ENCODE measurements at regions of chr9 and their contacts with region 1.

Region 1: GRCh38 chr9:89428901-89429890 is 68.7 kb downstream of the SEMA4D start:
- DNase-seq: no peak
- ATAC-seq: peak; percentile 25
- H3K4me3 ChIP-seq: no peak overlapping the region
- H3K27ac ChIP-seq: peak overlapping the region; percentile 90
- H3K4me1 ChIP-seq: peaks cover 81% of the 10 kb centered on the region
- H3K27me3 ChIP-seq: no peaks in the 10 kb centered on the region
- CTCF ChIP-seq: peak; percentile 60 to 84 (median 74)
- EP300 ChIP-seq: no peak
- POLR2A ChIP-seq: no peak
- RAD21 ChIP-seq: peak; percentile 85

Region 2: GRCh38 chr9:89367281-89367680 is 61.9 kb before region 1 on chr9:
- CTCF ChIA-PET with region 1: no interaction called
- POLR2A ChIA-PET with region 1: no interaction called
- RAD21 ChIA-PET with region 1: no interaction called
- SMC1A ChIA-PET with region 1: no interaction called
- in situ Hi-C with region 1: no loop called
- intact Hi-C with region 1: no loop called
- DNase-seq: no peak
- ATAC-seq: no peak
- H3K4me3 ChIP-seq: no peak overlapping the region
- H3K27ac ChIP-seq: no peak overlapping the region
- H3K4me1 ChIP-seq: no peaks in the 10 kb centered on the region
- H3K27me3 ChIP-seq: no peaks in the 10 kb centered on the region
- CTCF ChIP-seq: no peak
- EP300 ChIP-seq: no peak
- POLR2A ChIP-seq: no peak; the same call in 1 of the 2 replicates
- RAD21 ChIP-seq: no peak

Region 3: DNA sequence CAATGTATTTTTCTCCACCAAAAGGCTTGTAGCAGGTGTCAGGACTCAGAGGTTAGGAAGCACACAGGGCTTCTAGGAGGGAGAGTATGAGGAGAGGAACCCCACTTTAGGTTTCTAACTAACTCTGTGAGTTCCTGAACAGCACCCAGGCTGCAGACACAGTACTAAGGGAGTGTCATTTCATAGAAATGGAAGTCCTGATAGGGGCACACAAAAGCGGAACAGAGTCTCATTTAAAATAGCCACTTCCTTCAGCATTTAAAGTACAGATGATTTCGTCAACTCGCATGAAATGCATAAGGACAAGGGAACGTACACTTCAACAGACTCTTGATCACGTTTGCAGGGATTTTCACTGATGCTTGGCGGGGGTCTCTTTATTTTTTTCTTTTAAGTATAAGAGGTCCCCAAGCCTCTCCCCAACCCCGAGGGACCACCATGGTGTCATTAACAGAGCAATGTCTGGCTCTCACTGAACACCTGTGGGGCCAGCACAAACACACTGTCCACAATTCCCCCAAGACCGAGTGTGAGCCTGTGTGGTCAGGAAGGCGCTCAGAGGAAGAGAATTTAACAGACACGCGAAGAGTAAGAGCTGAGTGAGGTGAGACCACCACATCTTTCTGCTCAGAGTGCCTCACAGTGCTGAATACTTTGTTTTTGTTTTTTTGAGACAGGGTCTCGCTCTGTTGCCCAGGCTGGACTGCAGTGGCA is 28.6 kb before region 1 on chr9:
- CTCF ChIA-PET with region 1: interaction called, 11 read pairs
- POLR2A ChIA-PET with region 1: interaction called, 11 read pairs
- RAD21 ChIA-PET with region 1: interaction called, 29 read pairs
- SMC1A ChIA-PET with region 1: interaction called, 20 read pairs
- in situ Hi-C with region 1: no loop called
- intact Hi-C with region 1: loop called (anchors 1 kb)
- DNase-seq: no peak
- ATAC-seq: peak; percentile 93
- H3K4me3 ChIP-seq: peak overlapping the region; percentile 33; the same call in 1 of the 2 replicates
- H3K27ac ChIP-seq: peak overlapping the region; percentile 72
- H3K4me1 ChIP-seq: peaks cover 39% of the 10 kb centered on the region
- H3K27me3 ChIP-seq: no peaks in the 10 kb centered on the region
- CTCF ChIP-seq: no peak
- EP300 ChIP-seq: peak in 1 of 2 experiments; percentile 28; a peak in 1 of 4 replicates
- POLR2A ChIP-seq: no peak
- RAD21 ChIP-seq: no peak

Region 4: GRCh38 chr9:89418882-89419640 is 10.1 kb before region 1 on chr9:
- CTCF ChIA-PET with region 1: interaction called, 20 read pairs
- POLR2A ChIA-PET with region 1: interaction called, 8 read pairs
- RAD21 ChIA-PET with region 1: interaction called, 18 read pairs
- SMC1A ChIA-PET with region 1: interaction called, 46 read pairs
- in situ Hi-C with region 1: no loop called
- intact Hi-C with region 1: no loop called
- DNase-seq: no peak
- ATAC-seq: peak; percentile 87
- H3K4me3 ChIP-seq: peak overlapping the region; percentile 62; the same call in 1 of the 2 replicates
- H3K27ac ChIP-seq: peak overlapping the region; percentile 97
- H3K4me1 ChIP-seq: peaks cover 67% of the 10 kb centered on the region
- H3K27me3 ChIP-seq: no peaks in the 10 kb centered on the region
- CTCF ChIP-seq: no peak
- EP300 ChIP-seq: no peak
- POLR2A ChIP-seq: peak; percentile 51
- RAD21 ChIP-seq: no peak

Region 5: DNA sequence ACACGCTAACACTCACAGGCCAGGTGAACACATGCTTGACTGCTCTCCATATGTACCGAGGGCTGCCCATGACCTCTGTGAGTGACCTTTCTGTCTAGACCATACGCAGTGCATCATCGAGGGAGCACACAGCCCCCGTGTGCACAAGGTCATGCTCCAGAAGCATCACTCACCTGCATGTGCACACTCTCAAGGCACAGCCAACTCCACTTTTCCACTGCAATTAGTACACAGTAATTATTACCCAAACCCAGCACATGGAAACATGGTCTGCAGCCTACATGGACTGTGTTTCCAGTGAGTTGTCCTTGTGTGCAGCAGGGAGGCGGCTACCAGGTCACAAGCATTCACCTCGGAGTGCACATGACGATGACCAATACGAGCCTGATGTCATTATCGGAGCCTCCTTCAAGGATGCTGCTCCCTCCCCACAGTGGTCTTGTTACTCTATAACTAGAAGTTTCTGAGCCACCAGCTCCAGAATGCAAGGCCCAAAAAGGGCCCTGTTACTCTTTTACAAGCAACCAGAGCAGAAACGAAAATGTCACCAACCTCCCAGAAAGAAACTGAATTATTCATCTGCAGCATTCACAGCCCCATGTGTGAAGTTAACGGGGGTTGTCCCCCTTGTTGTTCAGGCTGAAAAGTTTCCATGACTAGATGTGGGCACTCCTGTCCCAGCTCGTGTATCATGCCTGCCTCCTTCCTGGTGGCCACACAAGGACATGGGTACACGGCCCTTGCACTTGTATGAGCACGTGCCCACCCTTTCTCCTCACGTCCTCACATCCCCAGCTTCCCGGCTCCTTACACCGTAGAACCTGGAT is 37.5 kb after region 1 on chr9:
- CTCF ChIA-PET with region 1: interaction called, 14 read pairs
- POLR2A ChIA-PET with region 1: interaction called, 6 read pairs
- RAD21 ChIA-PET with region 1: interaction called, 18 read pairs
- SMC1A ChIA-PET with region 1: interaction called, 11 read pairs
- in situ Hi-C with region 1: no loop called
- intact Hi-C with region 1: loop called (anchors 1 kb)
- DNase-seq: peak; percentile 83
- ATAC-seq: peak; percentile 74
- H3K4me3 ChIP-seq: peak overlapping the region; percentile 55; the same call in 1 of the 2 replicates
- H3K27ac ChIP-seq: peak overlapping the region; percentile 99
- H3K4me1 ChIP-seq: peaks cover 88% of the 10 kb centered on the region
- H3K27me3 ChIP-seq: no peaks in the 10 kb centered on the region
- CTCF ChIP-seq: no peak
- EP300 ChIP-seq: peak; percentile 42 to 48; a peak in 1 of 4 replicates
- POLR2A ChIP-seq: 0 out of 2 replicates have a peak, but pooled peaks have one; percentile 31
- RAD21 ChIP-seq: no peak

Region 6: DNA sequence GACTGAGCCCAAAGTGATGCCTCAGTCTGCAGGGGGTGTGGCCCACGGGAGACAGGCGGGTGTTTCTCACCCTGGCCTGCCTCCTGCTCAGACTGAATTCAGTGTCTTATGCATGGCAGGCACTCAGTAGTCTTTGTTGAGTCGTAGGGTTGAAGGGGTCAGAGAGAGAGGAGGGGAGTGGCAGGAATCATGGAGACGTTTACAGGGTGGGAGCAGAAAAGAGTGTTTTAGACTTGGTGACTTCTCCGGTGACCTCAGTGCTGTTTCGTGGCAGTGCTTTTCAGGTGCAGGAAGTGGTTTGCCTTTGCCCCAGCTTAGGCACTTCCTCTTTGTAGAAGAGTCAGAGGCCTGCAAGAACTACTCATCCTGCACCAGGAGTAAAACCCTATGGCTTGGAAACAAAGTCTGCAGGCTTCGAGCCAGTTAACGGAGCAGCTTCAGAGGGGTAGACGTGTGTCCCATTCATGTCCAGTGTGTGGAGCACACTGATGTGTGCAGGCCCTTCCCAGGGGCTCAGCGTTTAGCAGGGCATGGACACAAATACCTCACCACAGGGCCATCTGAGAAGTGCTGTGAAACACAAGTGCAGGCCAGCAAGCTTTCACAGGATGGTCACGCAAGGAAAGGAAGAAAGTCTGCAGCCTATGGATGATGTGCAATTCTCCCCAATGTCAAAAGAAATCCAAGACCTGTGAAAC is 93.2 kb after region 1 on chr9:
- CTCF ChIA-PET with region 1: interaction called, 14 read pairs
- POLR2A ChIA-PET with region 1: interaction called, 5 read pairs
- RAD21 ChIA-PET with region 1: interaction called, 6 read pairs
- SMC1A ChIA-PET with region 1: interaction called, 7 read pairs
- in situ Hi-C with region 1: no loop called
- intact Hi-C with region 1: no loop called
- DNase-seq: peak; percentile 83
- ATAC-seq: peak; percentile 95
- H3K4me3 ChIP-seq: peak overlapping the region; percentile 24; the same call in 1 of the 2 replicates
- H3K27ac ChIP-seq: peak overlapping the region; percentile 85
- H3K4me1 ChIP-seq: peaks cover 49% of the 10 kb centered on the region
- H3K27me3 ChIP-seq: no peaks in the 10 kb centered on the region
- CTCF ChIP-seq: no peak
- EP300 ChIP-seq: 0 out of 4 replicates have a peak, but pooled peaks of 1 of the 2 experiments have one; percentile 49
- POLR2A ChIP-seq: peak; percentile 51; the same call in 1 of the 2 replicates
- RAD21 ChIP-seq: no peak

Region 7: GRCh38 chr9:89542401-89543021 is 113.3 kb after region 1 on chr9:
- CTCF ChIA-PET with region 1: interaction called, 207 read pairs
- POLR2A ChIA-PET with region 1: interaction called, 13 read pairs
- RAD21 ChIA-PET with region 1: interaction called, 119 read pairs
- SMC1A ChIA-PET with region 1: interaction called, 150 read pairs
- in situ Hi-C with region 1: loop called (anchors 5 kb)
- intact Hi-C with region 1: no loop called
- DNase-seq: no peak
- ATAC-seq: peak; percentile 78
- H3K4me3 ChIP-seq: no peak overlapping the region
- H3K27ac ChIP-seq: no peak overlapping the region
- H3K4me1 ChIP-seq: peaks cover 12% of the 10 kb centered on the region
- H3K27me3 ChIP-seq: no peaks in the 10 kb centered on the region
- CTCF ChIP-seq: no peak
- EP300 ChIP-seq: no peak
- POLR2A ChIP-seq: no peak
- RAD21 ChIP-seq: no peak